Gastrocnemius medialis (tissue), 4 donors: ENCODE measurements at regions of chr7 and their contacts with region 1.

Region 1: GRCh38 chr7:107344799-107345198 is 125.1 kb upstream of the GPR22 start:
- DNase-seq: no peak
- ATAC-seq: no peak
- H3K4me3 ChIP-seq: no peak overlapping the region
- H3K27ac ChIP-seq: no peak overlapping the region
- H3K4me1 ChIP-seq: no peaks in the 10 kb centered on the region
- H3K27me3 ChIP-seq: no peaks in the 10 kb centered on the region
- CTCF ChIP-seq: no peak
- POLR2A ChIP-seq: no peak

Region 2: GRCh38 chr7:107355616-107356015 is 10.8 kb after region 1 on chr7:
- in situ Hi-C with region 1: no loop called
- intact Hi-C with region 1: loop called (anchors 1 kb)
- DNase-seq: no peak
- ATAC-seq: no peak
- H3K4me3 ChIP-seq: no peak overlapping the region
- H3K27ac ChIP-seq: no peak overlapping the region
- H3K4me1 ChIP-seq: no peaks in the 10 kb centered on the region
- H3K27me3 ChIP-seq: no peaks in the 10 kb centered on the region
- CTCF ChIP-seq: no peak
- POLR2A ChIP-seq: no peak

Region 3: GRCh38 chr7:107446531-107446930 is 101.7 kb after region 1 on chr7:
- in situ Hi-C with region 1: no loop called
- intact Hi-C with region 1: no loop called
- DNase-seq: no peak
- ATAC-seq: no peak
- H3K4me3 ChIP-seq: no peak overlapping the region
- H3K27ac ChIP-seq: no peak overlapping the region
- H3K4me1 ChIP-seq: peaks cover 0 to 4% of the 10 kb centered on the region in 2 donors
- H3K27me3 ChIP-seq: no peaks in the 10 kb centered on the region
- CTCF ChIP-seq: no peak
- POLR2A ChIP-seq: no peak

Region 4: GRCh38 chr7:107594961-107595737 is 250.3 kb after region 1 on chr7:
- in situ Hi-C with region 1: no loop called
- intact Hi-C with region 1: no loop called
- DNase-seq: no peak
- ATAC-seq: peak; percentile 70 to 74
- H3K4me3 ChIP-seq: no peak overlapping the region
- H3K27ac ChIP-seq: peak overlapping the region; percentile 34 to 61 (median 40)
- H3K4me1 ChIP-seq: peaks cover 5 to 7% of the 10 kb centered on the region in 2 donors
- H3K27me3 ChIP-seq: no peaks in the 10 kb centered on the region
- CTCF ChIP-seq: no peak
- POLR2A ChIP-seq: no peak